Spleen (tissue), 13 donors: ENCODE measurements at regions of chr16 and their contacts with region 1.

Region 1: DNA sequence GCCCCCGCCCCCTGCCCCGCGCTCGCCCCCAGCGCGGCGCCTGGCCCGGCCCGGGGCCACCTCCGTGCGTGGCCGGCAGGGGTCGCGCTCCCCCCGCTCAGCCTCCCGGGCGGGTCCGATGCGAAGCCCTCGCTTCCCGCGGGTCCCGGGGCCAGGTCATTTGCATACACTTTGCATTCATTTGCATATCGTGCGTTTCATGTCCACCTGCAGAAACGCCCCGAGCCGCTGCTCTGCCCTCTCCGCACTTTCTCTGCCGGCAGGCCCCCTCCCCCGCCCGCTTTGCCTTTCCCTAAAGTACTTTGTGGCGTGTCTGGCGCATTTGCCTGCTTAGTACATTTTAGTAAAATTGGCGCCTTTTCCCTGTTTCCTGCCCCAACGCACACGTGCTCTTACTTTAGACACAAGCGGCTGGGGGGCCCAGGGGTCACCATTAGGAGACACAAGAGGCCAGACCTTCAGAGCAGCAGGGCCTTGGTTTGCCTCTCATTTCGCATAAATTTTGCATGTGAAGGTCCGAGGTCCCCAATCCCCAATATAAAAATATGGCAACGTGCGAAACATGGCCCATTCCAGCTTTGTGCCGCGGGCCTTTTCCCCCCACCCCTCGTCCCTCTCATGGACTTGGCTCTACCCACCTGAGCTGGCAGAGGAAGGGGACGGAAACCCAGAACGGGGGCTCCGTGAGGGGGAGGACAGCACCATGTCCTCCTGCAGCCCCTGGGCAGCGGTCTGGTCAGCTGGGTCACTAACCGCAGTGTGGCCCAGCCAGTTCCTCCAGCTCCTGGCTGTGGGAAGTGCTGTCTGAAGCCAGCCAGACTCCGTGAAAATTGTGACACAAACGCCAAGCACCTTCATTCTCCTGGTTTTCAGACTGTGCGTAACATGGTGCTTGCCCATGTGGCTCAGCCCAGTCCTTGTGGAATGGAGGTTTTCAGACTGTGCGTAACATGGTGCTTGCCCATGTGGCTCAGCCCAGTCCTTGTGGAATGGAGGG is 34.8 kb downstream of the CBFA2T3 start:
- DNase-seq: peak; percentile 94
- H3K4me3 ChIP-seq: peak overlapping the region in 7 of 8 donors; percentile 23 to 88 (median 68)
- H3K27ac ChIP-seq: peak overlapping the region in 4 of 8 donors; percentile 32 to 92 (median 55)
- H3K4me1 ChIP-seq: peaks cover 27 to 83% (median 59%) of the 10 kb centered on the region in 6 donors
- H3K27me3 ChIP-seq: peaks cover 0 to 61% (median 4%) of the 10 kb centered on the region in 7 donors
- CTCF ChIP-seq: peak; percentile 28 to 93 (median 80)
- POLR2A ChIP-seq: no peak

Region 2: DNA sequence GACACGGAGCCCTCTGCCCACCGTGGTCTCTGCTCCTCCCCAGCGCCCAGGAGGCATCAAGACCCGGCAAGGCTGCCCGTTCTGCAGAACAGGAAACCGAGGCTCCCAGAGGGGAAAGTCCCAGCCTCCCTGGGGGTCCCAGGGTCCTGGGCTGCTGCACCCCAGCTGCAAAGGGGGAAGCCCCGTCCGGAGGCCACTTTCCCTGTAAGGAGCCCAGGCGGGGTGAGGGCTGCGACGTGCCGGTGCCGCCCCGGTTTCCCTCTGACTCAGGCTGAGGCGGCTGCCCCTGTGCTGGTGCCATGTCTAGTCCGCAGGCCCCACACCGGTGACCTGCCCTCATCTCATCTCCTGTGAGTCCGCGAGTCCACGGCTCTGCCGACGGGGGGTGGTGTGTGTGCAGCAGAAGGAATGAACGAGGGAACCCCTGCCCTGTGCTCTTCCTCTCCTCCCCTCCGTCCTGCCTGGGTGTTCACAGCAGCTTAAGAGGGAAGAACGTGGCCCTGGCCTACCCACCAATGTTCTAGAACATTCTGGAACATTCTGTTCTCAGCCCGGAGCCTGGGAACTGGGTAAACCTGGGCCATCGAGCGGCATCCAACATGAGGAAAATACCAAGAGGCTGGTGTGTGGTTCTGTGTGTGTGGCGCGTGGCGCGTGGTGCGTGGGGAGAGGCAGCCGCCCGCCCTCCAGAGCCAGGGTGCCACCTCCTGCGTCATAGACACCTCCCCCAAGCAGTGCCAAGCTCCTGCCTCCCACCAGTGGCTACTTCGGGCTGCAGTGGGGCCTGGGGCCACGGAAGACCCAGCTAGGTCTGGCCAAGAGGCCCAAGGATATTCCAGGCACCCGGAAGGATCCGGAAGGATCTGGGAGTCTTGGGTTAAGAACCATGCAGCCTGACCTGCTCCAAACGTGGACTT is 41.8 kb after region 1 on chr16:
- intact Hi-C with region 1: no loop called
- DNase-seq: peak; percentile 92
- H3K4me3 ChIP-seq: peak overlapping the region in 1 of 8 donors; percentile 43
- H3K27ac ChIP-seq: peak overlapping the region in 2 of 8 donors; percentile 38 to 63
- H3K4me1 ChIP-seq: peaks cover 3 to 69% (median 59%) of the 10 kb centered on the region in 6 donors
- H3K27me3 ChIP-seq: peaks cover 0 to 27% (median 0%) of the 10 kb centered on the region in 7 donors
- CTCF ChIP-seq: no peak
- POLR2A ChIP-seq: no peak

Region 3: DNA sequence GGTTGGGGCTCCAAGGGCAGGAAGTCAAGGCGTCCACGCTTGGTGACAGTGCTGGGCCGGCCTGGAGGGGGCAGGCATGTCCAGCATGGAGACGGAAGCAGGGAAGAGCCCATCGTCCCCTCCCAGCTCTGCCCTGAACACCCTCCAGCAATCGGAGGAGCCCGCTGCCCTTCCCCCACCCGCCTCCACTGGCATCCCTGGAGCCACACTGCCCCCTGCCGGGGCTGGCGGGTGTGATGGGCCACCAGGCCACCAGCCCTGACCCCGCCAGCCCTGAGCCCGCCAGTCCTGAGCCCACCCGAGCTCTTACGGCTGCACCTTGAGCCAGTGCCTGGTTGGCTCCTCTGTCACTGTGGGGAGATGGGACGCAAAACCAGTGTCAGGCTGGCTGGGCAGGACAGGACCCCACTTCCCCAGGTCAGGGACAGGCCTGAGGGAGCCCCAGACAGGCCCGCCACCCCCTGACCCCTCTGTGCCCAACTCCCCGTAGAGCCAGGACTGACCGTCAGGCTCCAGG is 225.3 kb after region 1 on chr16:
- intact Hi-C with region 1: loop called (anchors 10 kb)
- DNase-seq: peak; percentile 97
- H3K4me3 ChIP-seq: peak overlapping the region in 6 of 8 donors; percentile 14 to 53 (median 30)
- H3K27ac ChIP-seq: peak overlapping the region in 5 of 8 donors; percentile 58 to 66 (median 60)
- H3K4me1 ChIP-seq: peaks cover 15 to 75% (median 41%) of the 10 kb centered on the region in 6 donors
- H3K27me3 ChIP-seq: peaks cover 0 to 71% (median 14%) of the 10 kb centered on the region in 7 donors
- CTCF ChIP-seq: peak; percentile 87 to 98 (median 95)
- POLR2A ChIP-seq: no peak

Region 4: DNA sequence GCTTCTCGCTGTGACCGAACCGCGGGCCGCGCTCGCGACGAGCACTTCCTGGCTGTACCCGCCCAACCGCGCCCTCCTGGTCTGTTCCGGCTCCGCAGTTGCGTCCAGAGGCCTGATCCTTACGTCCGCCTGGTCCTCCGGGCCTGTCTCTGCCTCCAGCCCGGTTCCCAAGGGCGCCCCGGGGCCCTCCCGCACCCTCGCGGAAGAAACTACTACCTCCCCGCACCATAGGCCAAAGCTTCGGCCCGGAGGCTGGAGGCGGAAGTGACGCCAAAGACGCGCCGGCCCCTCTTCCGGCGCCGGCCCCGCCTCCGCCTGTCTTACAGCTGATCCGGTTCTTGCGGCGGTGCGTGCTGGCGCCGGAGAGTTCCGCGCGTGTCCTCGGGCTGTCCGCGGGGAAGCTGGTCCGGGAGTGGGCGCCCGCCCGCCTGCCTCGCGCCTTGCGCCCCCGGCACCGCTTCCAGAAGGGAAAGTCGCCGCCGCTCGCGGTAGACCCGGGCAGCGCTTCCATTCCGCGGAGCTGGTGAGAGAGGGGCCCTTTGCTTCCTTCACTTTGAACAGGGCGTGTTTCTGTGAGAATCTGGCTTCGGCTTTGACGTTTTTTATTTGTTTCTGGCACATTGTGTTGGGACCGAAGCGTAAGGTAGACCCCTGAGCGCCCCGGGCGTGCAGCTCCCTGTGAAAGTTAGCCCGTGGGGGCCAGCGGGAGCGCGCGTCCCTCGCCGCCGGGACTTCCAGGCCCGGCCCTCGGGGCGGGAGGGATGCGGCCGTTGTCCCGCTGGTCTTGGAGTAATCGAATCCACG is 275.4 kb after region 1 on chr16 and contains the start of gene ZNF778:
- intact Hi-C with region 1: loop called (anchors 10 kb)
- DNase-seq: peak; percentile 96
- H3K4me3 ChIP-seq: peak within 1 kb of the TSS; percentile 86 to 100 (median 98)
- H3K27ac ChIP-seq: peak within 1 kb of the TSS; percentile 95 to 99 (median 96)
- H3K4me1 ChIP-seq: peaks cover 19 to 62% (median 33%) of the 10 kb centered on the region in 6 donors
- H3K27me3 ChIP-seq: no peaks in the 10 kb centered on the region
- CTCF ChIP-seq: peak in 4 of 11 experiments; percentile 5 to 40 (median 16)
- POLR2A ChIP-seq: peak in 2 of 3 donors; percentile 3 to 48
- total RNA-seq, gene ZNF778: 9.4 to 34.4 (median 12.9) TPM